ENCODE measurements at regions of chr17 and their contacts with region 1.

Region 1: DNA sequence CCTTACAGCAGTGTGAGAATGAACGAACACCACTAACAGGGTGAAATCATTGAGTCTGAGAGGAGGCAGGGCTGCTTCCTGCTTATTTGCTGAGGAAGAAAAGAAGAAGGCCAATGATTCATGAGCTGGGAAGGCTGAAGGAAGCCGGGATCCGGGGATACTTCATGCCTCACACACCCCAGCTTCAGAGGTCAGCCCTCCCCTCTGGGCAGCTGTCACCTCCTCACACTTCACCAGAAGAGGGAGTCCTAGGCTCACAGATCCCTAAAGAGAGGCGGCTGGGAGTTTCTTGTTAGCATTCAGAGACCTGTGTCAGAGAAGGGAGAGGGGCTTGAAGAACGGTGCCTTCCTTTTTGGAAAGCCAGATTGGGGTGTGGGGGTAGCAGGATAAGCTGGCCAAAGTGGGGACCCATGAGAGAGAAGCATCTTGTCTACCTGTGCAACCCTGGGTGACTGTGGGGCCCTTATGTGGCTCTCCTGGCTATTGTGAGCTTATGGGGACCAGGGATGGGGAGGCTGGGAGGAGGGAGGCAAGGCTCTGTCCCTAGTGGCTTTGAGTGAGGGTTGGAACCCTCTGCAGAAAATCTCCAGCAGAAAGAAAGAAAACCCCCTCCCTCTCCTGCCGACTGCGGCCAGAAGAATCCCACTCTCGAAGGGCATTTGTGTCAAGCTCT is 94.6 kb downstream of the RGS9 start:
- DNase-seq: peak; percentile 42
- H3K4me3 Mint-ChIP-seq: no peak overlapping the region
- H3K27ac Mint-ChIP-seq: no peak overlapping the region
- H3K4me1 Mint-ChIP-seq: peaks cover 34% of the 10 kb centered on the region
- H3K27me3 Mint-ChIP-seq: peaks cover 27% of the 10 kb centered on the region

Region 2: DNA sequence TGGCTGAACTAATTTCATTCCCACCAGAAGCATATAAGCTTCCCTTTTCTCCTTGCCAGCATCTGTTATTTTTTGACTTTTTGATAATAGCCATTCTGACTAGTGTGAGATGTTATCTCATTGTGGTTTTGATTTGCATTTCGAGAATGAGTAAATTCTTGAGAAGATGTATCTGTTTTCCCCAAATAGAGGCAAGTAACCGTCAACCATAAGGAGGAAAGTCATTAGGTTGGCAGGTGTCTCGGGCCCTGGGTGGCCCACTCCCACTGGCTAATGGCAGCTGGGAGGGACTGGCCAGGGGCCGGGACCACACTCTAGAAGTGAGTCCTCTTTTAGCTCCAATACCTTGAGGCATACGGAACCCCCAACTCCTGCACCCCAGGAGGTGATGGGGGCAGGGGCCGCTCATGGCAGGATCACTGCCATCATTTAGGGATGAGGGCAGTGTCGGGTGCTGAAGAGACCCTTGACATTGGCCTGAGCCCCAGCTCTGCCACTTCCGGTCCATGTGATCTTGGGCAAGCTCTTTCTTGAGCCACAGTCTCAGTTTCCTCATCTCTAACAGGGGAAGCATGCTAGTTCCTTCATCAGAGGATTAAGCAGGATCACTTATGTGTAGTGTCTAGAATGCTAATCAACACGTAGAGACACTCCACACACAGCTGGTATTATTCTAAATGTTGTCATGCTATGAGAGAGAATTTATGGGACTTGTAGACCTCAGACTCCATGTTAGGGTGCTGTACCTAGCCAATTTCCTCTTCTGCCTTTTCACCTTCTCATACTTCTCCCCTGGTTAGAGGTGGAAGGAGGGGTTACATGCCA is 50.4 kb before region 1 on chr17:
- intact Hi-C with region 1: loop called (anchors 2 kb)
- DNase-seq: peak; percentile 32
- H3K4me3 Mint-ChIP-seq: peak overlapping the region; percentile 31
- H3K27ac Mint-ChIP-seq: peak overlapping the region; percentile 78
- H3K4me1 Mint-ChIP-seq: peaks cover 79% of the 10 kb centered on the region
- H3K27me3 Mint-ChIP-seq: peaks cover 11% of the 10 kb centered on the region

Region 3: DNA sequence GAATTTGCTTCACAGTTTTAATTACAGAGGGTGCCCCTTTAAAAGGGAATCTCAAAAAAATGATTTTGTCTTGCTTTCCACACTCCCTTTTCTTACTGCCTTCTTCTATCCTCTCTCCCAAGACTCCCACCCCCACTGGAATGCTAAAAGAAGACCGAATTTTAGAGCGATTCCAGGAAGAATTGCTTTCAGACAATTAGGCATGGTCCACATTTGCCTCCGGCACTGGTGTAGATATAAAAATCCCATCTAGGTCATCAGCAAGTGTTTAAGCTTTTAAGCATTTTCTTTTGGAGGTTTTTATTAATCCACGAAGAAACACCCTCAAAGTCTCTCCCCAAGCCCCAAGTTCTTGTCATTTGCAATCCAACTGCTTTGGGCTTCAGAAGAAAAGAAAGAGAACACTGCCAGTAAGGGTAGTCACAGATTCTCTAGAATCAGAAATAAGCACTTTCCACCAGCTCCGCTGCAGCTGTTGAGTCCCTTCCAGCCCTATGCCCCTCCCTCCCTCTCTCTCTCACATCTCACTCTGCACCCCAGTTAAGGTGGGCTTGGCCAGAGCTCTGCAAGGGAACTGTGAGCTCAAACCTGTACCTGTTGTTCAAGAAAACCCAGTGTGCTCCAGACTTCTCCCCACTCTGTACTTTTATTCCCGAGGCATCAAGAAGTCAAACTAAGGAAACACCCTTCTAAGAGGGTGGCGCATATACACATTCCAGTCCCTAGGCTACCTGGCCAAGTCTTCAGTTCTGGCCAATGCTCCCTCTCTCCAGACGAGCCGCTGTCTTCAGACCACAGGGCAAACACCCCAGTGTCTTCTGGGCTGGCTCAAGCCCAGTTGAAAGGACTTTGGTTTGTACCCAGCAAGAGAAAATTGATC is 75.5 kb after region 1 on chr17:
- intact Hi-C with region 1: no loop called
- DNase-seq: no peak
- H3K4me3 Mint-ChIP-seq: no peak overlapping the region
- H3K27ac Mint-ChIP-seq: no peak overlapping the region
- H3K4me1 Mint-ChIP-seq: no peaks in the 10 kb centered on the region
- H3K27me3 Mint-ChIP-seq: peaks cover 17% of the 10 kb centered on the region

Region 4: DNA sequence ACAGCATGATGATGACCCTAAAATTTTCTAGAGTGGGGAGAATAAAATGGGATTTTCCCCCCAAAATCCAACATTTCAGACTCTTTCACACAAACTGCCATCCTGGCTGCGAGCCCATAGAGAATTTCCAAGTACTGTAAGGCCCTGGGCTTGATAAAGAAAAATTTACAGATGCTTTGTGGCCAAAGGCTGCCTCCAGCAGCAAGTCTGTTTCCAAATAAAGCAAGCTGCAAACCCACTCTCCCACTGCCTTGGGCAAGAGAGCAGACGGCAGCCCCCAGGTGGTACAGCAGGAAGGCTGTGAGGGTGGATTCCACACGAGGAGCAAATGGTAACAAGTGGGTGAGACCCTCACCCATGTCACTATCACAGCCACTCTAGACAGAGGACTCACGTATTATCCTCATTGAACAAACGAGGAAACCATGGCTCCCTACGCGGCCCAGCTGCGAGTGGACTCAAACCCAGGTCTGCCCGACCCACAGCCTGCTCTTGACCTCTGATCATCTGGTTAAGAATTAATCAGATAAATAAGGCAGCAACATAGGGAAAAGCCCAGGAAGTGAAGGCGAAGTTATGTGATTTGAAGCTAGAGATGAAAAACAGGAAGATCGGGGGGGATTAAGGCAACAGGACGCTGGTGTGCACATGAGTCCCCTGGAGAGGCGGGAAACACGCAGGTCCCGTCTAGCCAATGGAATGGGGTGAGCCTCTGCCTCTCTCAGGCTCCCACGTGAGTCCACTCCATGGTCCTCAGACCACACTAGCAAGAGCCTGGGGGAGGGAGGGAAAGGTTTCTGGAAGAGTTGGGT is 292.3 kb after region 1 on chr17:
- intact Hi-C with region 1: loop called (anchors 1 kb)
- DNase-seq: no peak
- H3K4me3 Mint-ChIP-seq: peak overlapping the region; percentile 67
- H3K27ac Mint-ChIP-seq: peak overlapping the region; percentile 70
- H3K4me1 Mint-ChIP-seq: peaks cover 33% of the 10 kb centered on the region
- H3K27me3 Mint-ChIP-seq: peaks cover 42% of the 10 kb centered on the region

Region 5: DNA sequence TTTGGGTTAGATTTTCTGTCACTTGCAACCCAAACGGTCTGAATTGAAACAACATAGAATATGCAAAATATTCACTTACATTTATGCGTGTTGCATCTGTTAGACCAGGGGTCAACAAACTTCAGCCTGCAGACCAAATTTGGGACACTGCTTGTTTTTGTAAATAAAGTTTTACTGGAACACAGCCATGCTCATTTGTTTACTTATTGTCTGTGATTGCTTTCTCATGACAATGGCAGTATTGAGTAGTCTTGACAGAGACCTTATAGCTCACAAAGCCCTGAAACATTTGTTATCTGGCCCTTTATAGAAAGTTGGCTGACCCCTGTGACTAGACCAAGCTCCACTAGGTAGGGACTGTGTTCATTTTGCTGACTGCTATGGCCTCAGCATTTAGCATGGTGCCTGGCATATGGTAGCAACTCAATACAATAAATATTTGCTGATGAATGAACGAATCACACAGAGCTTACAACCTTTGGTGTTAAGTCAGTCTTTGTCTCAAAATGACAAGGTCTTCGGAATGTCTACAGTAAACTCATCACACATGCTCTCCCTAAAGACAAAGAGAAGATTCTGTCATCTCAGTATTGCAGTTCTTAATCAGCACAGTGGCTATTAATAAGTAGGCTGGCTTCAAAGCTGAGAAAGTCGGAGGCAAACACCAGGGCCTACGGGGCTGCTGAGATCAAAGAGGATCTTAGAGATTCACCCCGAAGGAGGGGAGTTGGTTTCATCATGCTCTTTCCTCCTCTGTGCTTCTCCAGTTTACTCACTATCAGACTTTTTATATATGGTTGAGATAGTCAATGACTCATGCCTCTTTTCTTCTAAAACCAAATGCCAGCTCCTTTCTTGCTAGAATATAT is 424.8 kb after region 1 on chr17:
- intact Hi-C with region 1: loop called (anchors 1 kb)
- DNase-seq: no peak
- H3K4me3 Mint-ChIP-seq: no peak overlapping the region
- H3K27ac Mint-ChIP-seq: no peak overlapping the region
- H3K4me1 Mint-ChIP-seq: no peaks in the 10 kb centered on the region
- H3K27me3 Mint-ChIP-seq: peaks cover 2% of the 10 kb centered on the region

Region 6: DNA sequence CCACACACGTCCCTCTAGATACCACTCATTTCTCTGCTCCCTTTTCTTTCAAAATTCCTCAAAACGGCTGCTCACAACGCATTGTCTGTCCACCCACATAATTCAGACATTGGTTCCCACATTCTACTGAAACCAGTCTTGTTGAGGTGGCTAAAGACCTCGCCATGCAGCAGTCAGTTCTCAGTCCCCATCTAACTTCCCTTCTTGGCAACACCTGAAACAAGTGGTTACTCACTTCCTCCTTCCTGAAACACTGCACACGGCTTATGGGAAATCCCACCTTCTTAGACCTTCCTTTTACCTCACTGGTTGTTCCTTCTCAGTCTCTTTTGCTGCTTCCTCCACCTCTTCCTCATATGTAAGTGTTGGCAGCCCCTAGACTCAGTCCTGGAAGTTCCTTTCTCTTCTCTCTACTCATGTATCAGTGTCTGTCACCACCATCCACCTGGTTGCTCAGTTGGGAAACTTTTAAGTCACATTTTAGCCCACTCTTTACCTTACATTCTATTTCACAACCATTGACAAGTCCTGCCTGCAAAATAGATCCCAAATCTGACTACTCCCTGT is 683.1 kb after region 1 on chr17:
- intact Hi-C with region 1: loop called (anchors 10 kb)
- DNase-seq: peak; percentile 1
- H3K4me3 Mint-ChIP-seq: peak overlapping the region; percentile 28
- H3K27ac Mint-ChIP-seq: peak overlapping the region; percentile 65
- H3K4me1 Mint-ChIP-seq: peaks cover 16% of the 10 kb centered on the region
- H3K27me3 Mint-ChIP-seq: no peaks in the 10 kb centered on the region